ENCODE measurements at regions of chr19 and their contacts with region 1.

Region 1: GRCh38 chr19:41746593-41747227 is 8.6 kb upstream of the CEACAM6 start:
- DNase-seq: peak in 3 of 10 donors; percentile 19 to 32 (median 19)

Region 2: DNA sequence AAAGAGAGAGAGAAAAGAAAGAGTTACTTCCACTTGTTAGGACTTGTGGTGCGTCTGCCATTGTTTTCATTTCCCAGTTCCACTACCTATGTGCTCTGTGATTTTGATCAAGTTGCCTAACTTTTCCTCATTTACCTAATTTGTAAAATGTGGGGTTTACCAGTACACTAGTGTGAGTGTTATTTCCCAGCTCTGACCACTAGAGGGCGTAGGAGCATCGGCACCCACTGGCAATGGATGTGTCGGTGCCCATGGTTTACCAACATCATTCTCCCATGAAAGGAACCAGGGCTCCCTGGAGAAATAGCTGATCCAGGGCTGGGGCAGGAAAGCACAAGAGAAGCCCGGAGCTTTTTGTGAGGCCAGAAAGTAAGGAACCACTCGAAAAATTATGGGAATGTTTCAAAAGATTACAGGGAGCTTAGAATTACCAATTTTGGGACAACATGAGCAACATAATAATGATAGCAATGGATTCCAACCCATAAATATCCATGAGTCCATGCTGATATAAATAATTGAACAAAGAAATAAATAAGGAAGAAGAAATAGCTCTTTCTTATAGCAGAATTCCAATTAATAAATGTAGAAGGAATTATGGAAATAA is 104.7 kb before region 1 on chr19:
- intact Hi-C with region 1: loop called (anchors 5 kb)
- DNase-seq: peak in 8 of 10 donors; percentile 45 to 91 (median 71)

Region 3: DNA sequence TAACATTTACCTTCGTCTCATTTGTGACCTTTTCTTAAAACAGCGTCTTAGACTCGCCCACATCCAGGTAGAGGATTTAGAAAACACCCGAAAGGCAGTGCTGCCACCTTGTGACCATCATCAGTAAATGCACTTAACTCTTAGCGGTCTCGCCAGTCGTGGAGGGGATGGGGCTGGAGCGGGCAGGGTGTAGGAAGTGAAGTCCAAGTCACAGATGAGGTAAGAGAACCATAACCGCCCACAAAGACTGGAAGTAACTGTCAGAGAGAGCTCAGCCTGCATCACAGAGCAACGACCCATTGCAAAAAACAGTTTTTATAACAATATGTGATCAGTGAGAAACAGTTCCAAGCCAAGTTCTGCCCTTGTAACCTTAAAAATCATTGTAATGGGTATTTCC is 38.9 kb after region 1 on chr19:
- intact Hi-C with region 1: no loop called
- DNase-seq: peak in 6 of 10 donors; percentile 22 to 84 (median 35)

Measured in posterior cingulate gyrus (tissue), 11 donors.